Mammary epithelial cell (primary cell): ENCODE measurements at regions of chr13 and their contacts with region 1.

Region 1: DNA sequence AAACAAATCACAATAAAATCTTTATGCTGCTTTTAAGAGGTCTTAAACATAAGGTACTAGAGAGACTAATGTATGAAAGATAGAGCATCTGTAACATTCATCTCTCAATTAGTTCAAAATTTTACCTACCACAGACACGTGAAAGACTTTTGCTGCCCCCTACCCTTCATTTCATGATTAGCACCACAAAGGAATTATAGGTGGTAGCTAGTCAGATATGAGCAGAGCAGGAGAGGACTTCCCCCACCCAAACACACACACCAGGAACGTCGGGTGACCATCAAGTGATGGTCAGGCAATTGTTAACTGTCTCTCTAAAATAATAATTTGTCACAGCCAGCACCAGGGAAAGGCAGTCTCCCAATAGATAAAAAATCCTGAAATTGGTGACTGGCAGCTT is 1531.7 kb upstream of the SPRY2 start:
- DNase-seq: no peak
- H3K4me3 ChIP-seq: no peak overlapping the region
- H3K27ac ChIP-seq: no peak overlapping the region
- H3K4me1 ChIP-seq: no peaks in the 10 kb centered on the region
- H3K27me3 ChIP-seq: no peaks in the 10 kb centered on the region
- CTCF ChIP-seq: peak in 1 of 2 donors; percentile 22

Region 2: GRCh38 chr13:81487151-81487550 is 385.4 kb before region 1 on chr13:
- CTCF ChIA-PET with region 1: no interaction called
- dilution Hi-C with region 1: no loop called
- in situ Hi-C with region 1: no loop called
- intact Hi-C with region 1: loop called (anchors 5 kb)
- DNase-seq: peak; percentile 17
- H3K4me3 ChIP-seq: no peak overlapping the region
- H3K27ac ChIP-seq: no peak overlapping the region
- H3K4me1 ChIP-seq: no peaks in the 10 kb centered on the region
- H3K27me3 ChIP-seq: no peaks in the 10 kb centered on the region
- CTCF ChIP-seq: peak; percentile 45 to 62

Region 3: DNA sequence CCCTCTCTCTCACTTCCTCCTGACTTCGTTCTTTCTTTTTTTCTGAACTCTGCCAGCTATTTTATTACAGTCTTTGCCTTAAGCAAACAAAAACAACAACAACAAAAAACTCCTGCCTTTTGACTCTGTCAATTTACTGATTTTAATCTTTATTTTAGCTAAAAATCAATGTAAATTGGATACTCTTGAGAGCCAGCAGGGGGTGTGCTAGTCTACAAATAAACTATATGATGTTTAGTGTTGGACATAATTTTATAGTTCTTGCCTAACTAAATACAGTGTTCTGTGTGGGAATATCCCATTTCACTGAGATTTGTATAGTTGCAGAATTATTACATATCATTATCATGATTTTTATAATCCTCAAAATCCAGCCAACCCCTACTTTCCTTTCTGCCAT is 331.8 kb before region 1 on chr13:
- CTCF ChIA-PET with region 1: interaction called, 4 read pairs
- dilution Hi-C with region 1: no loop called
- in situ Hi-C with region 1: no loop called
- intact Hi-C with region 1: loop called (anchors 5 kb)
- DNase-seq: no peak
- H3K4me3 ChIP-seq: no peak overlapping the region
- H3K27ac ChIP-seq: no peak overlapping the region
- H3K4me1 ChIP-seq: no peaks in the 10 kb centered on the region
- H3K27me3 ChIP-seq: no peaks in the 10 kb centered on the region
- CTCF ChIP-seq: peak; percentile 29 to 35

Region 4: GRCh38 chr13:82565201-82565600 is 692.6 kb after region 1 on chr13:
- CTCF ChIA-PET with region 1: no interaction called
- dilution Hi-C with region 1: no loop called
- in situ Hi-C with region 1: no loop called
- intact Hi-C with region 1: no loop called
- DNase-seq: no peak
- H3K4me3 ChIP-seq: no peak overlapping the region
- H3K27ac ChIP-seq: no peak overlapping the region
- H3K4me1 ChIP-seq: no peaks in the 10 kb centered on the region
- H3K27me3 ChIP-seq: no peaks in the 10 kb centered on the region
- CTCF ChIP-seq: no peak